ENCODE measurements at regions of chr9 and their contacts with region 1.

Region 1: GRCh38 chr9:35116898-35117551 is 1.4 kb upstream of the ATOSB start:
- DNase-seq: peak; percentile 67 to 91 (median 87)
- ATAC-seq: peak; percentile 77
- H3K4me3 ChIP-seq: peak overlapping the region; percentile 82
- H3K4me3 Mint-ChIP-seq: peak overlapping the region; percentile 88 to 100 (median 93)
- H3K27ac ChIP-seq: peak overlapping the region; percentile 79
- H3K27ac Mint-ChIP-seq: peak overlapping the region; percentile 89 to 98 (median 94)
- H3K4me1 ChIP-seq: peaks cover 26 to 33% of the 10 kb centered on the region in 2 donors
- H3K4me1 Mint-ChIP-seq: peaks cover 27 to 43% (median 41%) of the 10 kb centered on the region in 7 donors
- H3K27me3 ChIP-seq: no peaks in the 10 kb centered on the region
- H3K27me3 Mint-ChIP-seq: peaks cover 0 to 6% (median 0%) of the 10 kb centered on the region in 5 donors

Region 2: GRCh38 chr9:33473643-33474352 is 1643.2 kb before region 1 on chr9 and contains the start of gene NOL6:
- CTCF ChIA-PET with region 1: no interaction called
- POLR2A ChIA-PET with region 1: no interaction called
- intact Hi-C with region 1: loop called in 1 of 2 experiments (anchors 10 kb)
- DNase-seq: peak; percentile 91 to 99 (median 98)
- ATAC-seq: peak; percentile 100
- H3K4me3 ChIP-seq: peak within 1 kb of the TSS; percentile 88
- H3K4me3 Mint-ChIP-seq: peak within 1 kb of the TSS; percentile 88 to 100 (median 97)
- H3K27ac ChIP-seq: peak within 1 kb of the TSS; percentile 78
- H3K27ac Mint-ChIP-seq: peak within 1 kb of the TSS; percentile 88 to 99 (median 96)
- H3K4me1 ChIP-seq: peaks cover 13 to 19% of the 10 kb centered on the region in 2 donors
- H3K4me1 Mint-ChIP-seq: peaks cover 9 to 38% (median 31%) of the 10 kb centered on the region in 7 donors
- H3K27me3 ChIP-seq: no peaks in the 10 kb centered on the region
- H3K27me3 Mint-ChIP-seq: no peaks in the 10 kb centered on the region
- total RNA-seq, gene NOL6: 34.0 to 48.0 (median 44.0) TPM

Region 3: DNA sequence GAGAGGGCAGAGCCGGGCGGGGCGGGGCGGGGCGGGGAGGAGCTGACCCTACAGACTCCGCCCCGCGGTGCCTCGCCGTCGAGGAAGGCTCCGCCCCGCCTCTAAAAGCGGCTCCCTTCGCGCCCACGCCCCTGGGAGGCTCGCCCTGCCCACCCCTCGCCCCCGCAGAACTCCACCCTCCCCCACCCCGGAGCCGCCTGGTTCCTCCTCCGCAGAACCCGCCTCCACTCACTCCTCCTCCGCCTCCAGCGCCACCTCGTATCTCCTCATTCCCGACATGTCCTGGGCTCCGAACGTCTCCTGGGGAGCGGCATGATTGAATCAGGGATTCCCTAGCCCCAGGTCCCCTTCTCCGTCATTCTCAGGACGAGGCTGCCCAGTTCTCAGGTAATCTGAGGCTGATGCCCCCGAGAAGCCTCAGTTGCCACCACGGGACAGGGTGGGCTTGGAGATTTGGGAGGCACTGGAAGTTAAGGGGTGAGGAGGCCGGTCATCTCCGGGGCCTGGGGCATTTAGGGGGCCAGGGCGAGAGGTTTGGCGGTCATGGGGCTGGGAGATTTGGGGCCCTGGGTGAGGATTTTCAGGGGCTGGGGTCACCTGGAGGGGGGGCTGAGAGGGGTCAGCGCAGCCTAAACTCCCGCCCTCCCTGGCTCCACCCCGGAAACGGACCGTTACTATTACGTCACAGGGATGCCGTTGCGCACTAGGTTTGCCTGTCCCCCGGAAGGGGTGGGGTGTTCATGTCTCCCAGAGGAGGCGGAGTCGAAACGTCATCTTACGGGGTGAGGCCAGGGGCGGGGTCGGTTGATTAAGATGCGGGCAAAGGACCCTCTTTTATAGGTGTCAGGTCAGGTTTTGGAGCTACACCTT is 451.4 kb before region 1 on chr9:
- CTCF ChIA-PET with region 1: no interaction called
- POLR2A ChIA-PET with region 1: no interaction called
- intact Hi-C with region 1: loop called (anchors 2 to 5 kb)
- DNase-seq: peak; percentile 74 to 90 (median 84)
- ATAC-seq: peak; percentile 90
- H3K4me3 ChIP-seq: peak overlapping the region; percentile 99
- H3K4me3 Mint-ChIP-seq: peak overlapping the region; percentile 89 to 97 (median 94)
- H3K27ac ChIP-seq: peak overlapping the region; percentile 98
- H3K27ac Mint-ChIP-seq: peak overlapping the region; percentile 86 to 98 (median 97)
- H3K4me1 ChIP-seq: peaks cover 33 to 40% of the 10 kb centered on the region in 2 donors
- H3K4me1 Mint-ChIP-seq: peaks cover 37 to 58% (median 50%) of the 10 kb centered on the region in 7 donors
- H3K27me3 ChIP-seq: no peaks in the 10 kb centered on the region
- H3K27me3 Mint-ChIP-seq: no peaks in the 10 kb centered on the region

Region 4: GRCh38 chr9:34793428-34793827 is 323.6 kb before region 1 on chr9:
- CTCF ChIA-PET with region 1: no interaction called
- POLR2A ChIA-PET with region 1: no interaction called
- intact Hi-C with region 1: no loop called
- DNase-seq: no peak
- ATAC-seq: no peak
- H3K4me3 ChIP-seq: no peak overlapping the region
- H3K4me3 Mint-ChIP-seq: no peak overlapping the region
- H3K27ac ChIP-seq: no peak overlapping the region
- H3K27ac Mint-ChIP-seq: no peak overlapping the region
- H3K4me1 ChIP-seq: no peaks in the 10 kb centered on the region
- H3K4me1 Mint-ChIP-seq: no peaks in the 10 kb centered on the region
- H3K27me3 ChIP-seq: no peaks in the 10 kb centered on the region
- H3K27me3 Mint-ChIP-seq: peaks cover 22 to 76% (median 67%) of the 10 kb centered on the region in 5 donors

Region 5: GRCh38 chr9:35096035-35096849 is 20.8 kb before region 1 on chr9 and contains the start of gene PIGO:
- CTCF ChIA-PET with region 1: interaction called, 4 read pairs
- POLR2A ChIA-PET with region 1: interaction called, 7 read pairs
- intact Hi-C with region 1: loop called (anchors 1 kb)
- DNase-seq: peak; percentile 85 to 94 (median 92)
- ATAC-seq: peak; percentile 96
- H3K4me3 ChIP-seq: peak within 1 kb of the TSS; percentile 97
- H3K4me3 Mint-ChIP-seq: peak within 1 kb of the TSS; percentile 81 to 90 (median 86)
- H3K27ac ChIP-seq: peak within 1 kb of the TSS; percentile 99
- H3K27ac Mint-ChIP-seq: peak within 1 kb of the TSS; percentile 77 to 96 (median 94)
- H3K4me1 ChIP-seq: peaks cover 8 to 11% of the 10 kb centered on the region in 2 donors
- H3K4me1 Mint-ChIP-seq: peaks cover 25 to 50% (median 38%) of the 10 kb centered on the region in 7 donors
- H3K27me3 ChIP-seq: no peaks in the 10 kb centered on the region
- H3K27me3 Mint-ChIP-seq: no peaks in the 10 kb centered on the region
- total RNA-seq, gene PIGO: 27.1 to 36.0 (median 29.9) TPM

Region 6: GRCh38 chr9:35415386-35416096 is 298.5 kb after region 1 on chr9:
- CTCF ChIA-PET with region 1: no interaction called
- POLR2A ChIA-PET with region 1: no interaction called
- intact Hi-C with region 1: loop called in 1 of 2 experiments (anchors 10 kb)
- DNase-seq: no peak
- ATAC-seq: no peak
- H3K4me3 ChIP-seq: no peak overlapping the region
- H3K4me3 Mint-ChIP-seq: no peak overlapping the region
- H3K27ac ChIP-seq: no peak overlapping the region
- H3K27ac Mint-ChIP-seq: no peak overlapping the region
- H3K4me1 ChIP-seq: no peaks in the 10 kb centered on the region
- H3K4me1 Mint-ChIP-seq: peaks cover 0 to 2% (median 0%) of the 10 kb centered on the region in 7 donors
- H3K27me3 ChIP-seq: no peaks in the 10 kb centered on the region
- H3K27me3 Mint-ChIP-seq: peaks cover 26 to 56% (median 42%) of the 10 kb centered on the region in 5 donors

Region 7: DNA sequence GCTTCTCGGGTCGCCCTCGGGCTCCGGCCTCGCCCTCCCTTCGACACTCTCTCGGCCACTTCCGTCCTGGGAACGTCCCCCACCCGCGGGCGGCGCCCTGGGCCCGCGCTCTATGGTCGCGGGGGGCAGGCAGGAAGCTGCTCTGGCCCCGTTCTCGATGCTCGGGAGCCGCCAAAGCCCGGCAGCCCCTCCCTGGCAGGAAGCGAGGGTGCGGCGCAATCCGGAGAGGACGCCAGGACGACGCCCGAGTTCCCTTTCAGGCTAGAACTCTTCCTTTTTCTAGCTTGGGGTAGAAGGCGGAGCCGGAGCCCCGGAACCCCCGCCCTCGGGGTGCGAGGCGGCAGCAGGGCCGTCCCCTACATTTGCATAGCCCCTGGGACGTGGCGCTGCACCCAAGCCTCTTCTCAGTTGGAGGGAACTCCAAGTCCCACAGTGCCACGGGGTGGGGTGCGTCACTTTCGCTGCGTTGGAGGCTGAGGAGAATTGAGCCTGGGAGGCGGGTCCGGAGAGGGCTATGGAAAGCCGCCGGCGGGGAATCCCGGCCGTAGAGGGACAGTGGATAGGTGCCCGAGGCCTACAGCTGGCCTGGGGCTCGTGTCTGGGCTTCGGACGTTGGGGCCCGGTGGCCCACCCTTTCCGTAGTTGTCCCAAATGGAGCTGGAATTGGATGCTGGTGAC is 615.2 kb after region 1 on chr9 and contains the starts of genes CREB3 and TLN1:
- CTCF ChIA-PET with region 1: no interaction called
- POLR2A ChIA-PET with region 1: no interaction called
- intact Hi-C with region 1: loop called (anchors 1 kb)
- DNase-seq: peak; percentile 86 to 98 (median 96)
- ATAC-seq: peak; percentile 94
- H3K4me3 ChIP-seq: peak within 1 kb of the TSS; percentile 98
- H3K4me3 Mint-ChIP-seq: peak within 1 kb of the TSS in 5 of 10 donors; percentile 87 to 97 (median 94)
- H3K27ac ChIP-seq: peak within 1 kb of the TSS; percentile 93
- H3K27ac Mint-ChIP-seq: peak within 1 kb of the TSS in 6 of 9 donors; percentile 80 to 96 (median 92)
- H3K4me1 ChIP-seq: peaks cover 56 to 60% of the 10 kb centered on the region in 2 donors
- H3K4me1 Mint-ChIP-seq: peaks cover 20 to 34% (median 22%) of the 10 kb centered on the region in 7 donors
- H3K27me3 ChIP-seq: no peaks in the 10 kb centered on the region
- H3K27me3 Mint-ChIP-seq: no peaks in the 10 kb centered on the region
- total RNA-seq, gene CREB3: 13.4 to 22.1 (median 20.9) TPM
- total RNA-seq, gene TLN1: 191 to 369 (median 241) TPM

Region 8: DNA sequence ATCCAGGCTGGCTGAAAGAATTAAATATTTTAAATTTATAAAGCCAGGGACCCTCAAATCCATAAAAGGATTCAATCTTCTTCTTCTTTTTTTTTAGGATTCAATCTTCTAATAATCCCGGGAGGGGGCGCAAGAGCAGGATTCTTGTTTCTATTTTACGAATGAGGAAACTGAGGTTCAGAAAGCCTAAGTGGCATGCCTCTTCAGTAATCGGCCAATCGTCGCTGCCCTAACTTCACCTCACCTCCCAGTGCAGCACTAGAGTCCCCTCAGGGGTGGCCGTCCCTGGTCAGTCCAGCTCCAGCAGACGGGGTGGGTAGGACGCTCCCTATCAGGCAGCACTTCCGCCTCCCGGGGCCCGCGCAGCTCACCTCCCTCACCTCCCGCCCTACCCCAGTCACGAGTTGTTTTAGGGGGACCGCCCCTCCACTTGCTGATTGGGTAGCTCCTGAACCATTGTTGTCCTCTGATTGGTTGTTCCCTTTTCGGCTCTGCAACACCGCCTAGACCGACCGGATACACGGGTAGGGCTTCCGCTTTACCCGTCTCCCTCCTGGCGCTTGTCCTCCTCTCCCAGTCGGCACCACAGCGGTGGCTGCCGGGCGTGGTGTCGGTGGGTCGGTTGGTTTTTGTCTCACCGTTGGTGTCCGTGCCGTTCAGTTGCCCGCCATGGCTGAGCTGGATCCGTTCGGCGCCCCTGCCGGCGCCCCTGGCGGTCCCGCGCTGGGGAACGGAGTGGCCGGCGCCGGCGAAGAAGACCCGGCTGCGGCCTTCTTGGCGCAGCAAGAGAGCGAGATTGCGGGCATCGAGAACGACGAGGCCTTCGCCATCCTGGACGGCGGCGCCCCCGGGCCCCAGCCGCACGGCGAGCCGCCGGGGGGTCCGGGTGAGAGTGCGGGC is 1073.6 kb after region 1 on chr9 and contains the start of gene CLTA:
- CTCF ChIA-PET with region 1: no interaction called
- POLR2A ChIA-PET with region 1: no interaction called
- intact Hi-C with region 1: loop called in 1 of 2 experiments (anchors 10 kb)
- DNase-seq: peak; percentile 75 to 97 (median 96)
- ATAC-seq: peak; percentile 99
- H3K4me3 ChIP-seq: peak within 1 kb of the TSS; percentile 98
- H3K4me3 Mint-ChIP-seq: peak within 1 kb of the TSS; percentile 86 to 98 (median 95)
- H3K27ac ChIP-seq: peak within 1 kb of the TSS; percentile 91
- H3K27ac Mint-ChIP-seq: peak within 1 kb of the TSS; percentile 80 to 97 (median 94)
- H3K4me1 ChIP-seq: peaks cover 25 to 35% of the 10 kb centered on the region in 2 donors
- H3K4me1 Mint-ChIP-seq: peaks cover 43 to 58% (median 49%) of the 10 kb centered on the region in 7 donors
- H3K27me3 ChIP-seq: no peaks in the 10 kb centered on the region
- H3K27me3 Mint-ChIP-seq: no peaks in the 10 kb centered on the region
- total RNA-seq, gene CLTA: 32.2 to 140 (median 69.5) TPM